Activated CD8-positive, alpha-beta T cell treated with anti-CD3 and anti-CD28 coated beads, Interleukin-2, amount 10 ng/mL, durations not matched to agents 7 days and 5 days (primary cell): ENCODE measurements at regions of chr1 and their contacts with region 1.

Region 1: DNA sequence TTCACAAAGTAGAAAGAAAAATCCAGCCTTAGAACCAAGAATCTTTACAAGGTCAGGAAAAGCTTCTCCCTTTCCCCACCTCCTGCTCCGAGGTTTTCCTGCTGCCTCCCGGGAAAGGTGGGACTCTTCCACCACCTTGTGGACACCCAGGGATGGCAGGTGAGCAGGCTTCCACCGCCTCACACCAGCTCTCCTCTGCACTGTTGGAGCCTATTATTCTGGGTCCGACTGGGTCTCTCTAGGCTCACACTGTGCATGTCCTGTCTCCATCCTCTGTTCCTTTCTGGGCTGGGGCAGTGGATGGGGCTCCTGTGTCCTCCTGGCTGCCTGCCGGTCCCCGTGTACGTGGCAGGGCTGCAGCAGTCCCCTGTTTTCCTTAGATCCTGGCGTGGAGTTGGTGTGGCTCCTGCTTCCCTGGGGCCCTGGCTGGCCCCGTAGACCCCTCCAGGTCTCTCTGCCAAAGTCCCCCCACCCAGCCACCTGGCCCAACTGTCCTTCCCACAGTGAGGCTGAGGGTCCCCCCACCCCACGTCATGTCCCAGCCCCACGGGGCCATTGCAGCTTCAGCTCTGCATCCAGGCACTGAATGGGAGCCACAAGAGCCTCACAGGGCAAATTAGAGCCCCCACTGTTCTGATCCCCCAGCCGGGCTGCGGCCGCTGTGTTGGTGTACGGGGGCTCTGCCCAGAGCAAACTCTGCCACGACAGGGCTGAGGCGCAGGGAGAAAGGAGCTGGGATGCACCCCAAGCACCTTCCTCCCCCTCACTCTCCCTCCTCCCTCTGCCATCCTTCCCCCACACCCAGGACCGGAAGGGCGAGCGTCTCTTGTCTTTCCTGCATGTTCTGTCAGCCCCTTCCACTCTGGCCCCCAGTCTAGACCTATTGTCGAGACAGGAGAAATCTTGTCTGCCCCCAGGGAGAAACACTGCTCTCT is 3.3 kb upstream of the SLC45A1 start:
- DNase-seq: peak; percentile 49
- ATAC-seq: no peak
- H3K4me3 Mint-ChIP-seq: no peak overlapping the region
- H3K27ac Mint-ChIP-seq: no peak overlapping the region
- H3K4me1 Mint-ChIP-seq: peaks cover 18% of the 10 kb centered on the region
- H3K27me3 Mint-ChIP-seq: peaks cover 42% of the 10 kb centered on the region

Region 2: DNA sequence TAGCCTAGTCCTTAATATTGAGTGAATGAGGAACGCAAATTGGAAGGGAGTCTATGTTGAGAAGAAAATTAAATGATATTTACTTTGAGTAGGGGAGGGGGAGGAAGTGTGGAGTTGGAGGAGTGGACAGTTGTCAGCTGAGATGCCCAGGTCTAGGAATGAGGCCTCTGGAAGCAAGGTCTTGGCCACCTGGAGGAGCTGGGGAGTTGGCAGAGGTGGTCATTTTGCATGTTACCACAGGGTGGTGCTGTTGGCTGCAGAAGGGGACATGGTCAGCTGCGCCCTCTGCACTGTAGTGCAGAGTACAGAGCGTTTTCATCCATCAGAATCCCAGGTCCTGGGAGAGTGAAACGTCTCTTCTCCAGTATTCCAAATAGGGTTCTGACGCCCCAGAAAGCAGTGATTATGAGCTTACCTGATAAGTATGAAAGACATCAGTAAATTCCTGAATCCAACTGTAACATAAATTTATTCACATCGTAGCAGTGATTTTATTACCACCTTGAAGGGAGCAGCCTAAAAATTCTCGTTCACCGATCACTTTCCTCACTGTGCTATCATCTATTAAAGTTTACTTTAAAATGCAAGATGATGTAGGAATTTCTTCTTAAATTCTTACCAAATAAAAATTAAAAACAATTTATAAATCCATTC is 339.3 kb before region 1 on chr1:
- CTCF ChIA-PET with region 1: interaction called, 12 read pairs
- POLR2A ChIA-PET with region 1: no interaction called
- DNase-seq: peak; percentile 48
- ATAC-seq: peak; percentile 58
- H3K4me3 Mint-ChIP-seq: no peak overlapping the region
- H3K27ac Mint-ChIP-seq: no peak overlapping the region
- H3K4me1 Mint-ChIP-seq: peaks cover 6% of the 10 kb centered on the region
- H3K27me3 Mint-ChIP-seq: no peaks in the 10 kb centered on the region

Region 3: DNA sequence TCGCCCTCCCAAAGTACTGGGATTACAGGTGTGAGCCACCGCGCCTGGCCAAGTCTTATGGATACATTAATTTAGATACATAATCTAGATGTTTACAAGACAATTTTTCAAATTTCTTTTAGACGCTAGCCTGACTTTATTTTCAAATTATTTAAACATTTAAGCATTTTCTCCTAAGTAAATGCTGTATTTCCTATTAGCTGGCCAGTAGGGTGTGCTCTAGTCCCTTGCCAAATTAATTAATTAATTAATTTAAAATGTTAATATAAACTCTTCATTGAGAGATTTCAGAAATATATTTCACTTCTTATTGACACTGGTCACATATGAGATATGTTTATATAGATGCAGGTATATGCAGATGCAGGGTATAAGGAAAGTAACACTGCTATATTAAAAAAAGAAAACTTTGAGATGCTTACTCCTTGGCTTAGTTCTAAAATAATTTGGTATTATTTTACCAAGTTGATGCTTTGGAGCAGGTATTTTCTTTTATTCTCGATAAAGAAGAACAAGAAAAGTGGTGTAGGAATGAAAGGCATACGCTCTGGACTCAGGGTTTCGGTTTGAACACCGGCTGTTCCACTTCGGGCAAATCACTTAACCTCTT is 283.3 kb before region 1 on chr1:
- CTCF ChIA-PET with region 1: interaction called, 21 read pairs
- POLR2A ChIA-PET with region 1: no interaction called
- DNase-seq: no peak
- ATAC-seq: no peak
- H3K4me3 Mint-ChIP-seq: no peak overlapping the region
- H3K27ac Mint-ChIP-seq: no peak overlapping the region
- H3K4me1 Mint-ChIP-seq: peaks cover 5% of the 10 kb centered on the region
- H3K27me3 Mint-ChIP-seq: peaks cover 23% of the 10 kb centered on the region

Region 4: GRCh38 chr1:8342325-8342724 is 27.7 kb after region 1 on chr1:
- CTCF ChIA-PET with region 1: no interaction called
- POLR2A ChIA-PET with region 1: no interaction called
- DNase-seq: no peak
- ATAC-seq: no peak
- H3K4me3 Mint-ChIP-seq: no peak overlapping the region
- H3K27ac Mint-ChIP-seq: no peak overlapping the region
- H3K4me1 Mint-ChIP-seq: no peaks in the 10 kb centered on the region
- H3K27me3 Mint-ChIP-seq: no peaks in the 10 kb centered on the region